B cell (primary cell): ENCODE measurements at regions of chr10 and their contacts with region 1.

Region 1: GRCh38 chr10:114173921-114174694 is at the start of gene CCDC186:
- DNase-seq: peak; percentile 98
- ATAC-seq: peak; percentile 98
- H3K4me3 ChIP-seq: peak within 1 kb of the TSS; percentile 85 to 95 (median 88)
- H3K4me3 Mint-ChIP-seq: peak within 1 kb of the TSS; percentile 89
- H3K27ac ChIP-seq: peak within 1 kb of the TSS; percentile 81 to 84
- H3K27ac Mint-ChIP-seq: peak within 1 kb of the TSS; percentile 96
- H3K4me1 ChIP-seq: peaks cover 11 to 13% of the 10 kb centered on the region in 2 donors
- H3K4me1 Mint-ChIP-seq: peaks cover 34% of the 10 kb centered on the region
- H3K27me3 ChIP-seq: no peaks in the 10 kb centered on the region
- H3K27me3 Mint-ChIP-seq: peaks cover 3% of the 10 kb centered on the region
- CTCF ChIP-seq: no peak
- total RNA-seq, gene CCDC186: 31.5 and 33.8 TPM in 2 replicates

Region 2: DNA sequence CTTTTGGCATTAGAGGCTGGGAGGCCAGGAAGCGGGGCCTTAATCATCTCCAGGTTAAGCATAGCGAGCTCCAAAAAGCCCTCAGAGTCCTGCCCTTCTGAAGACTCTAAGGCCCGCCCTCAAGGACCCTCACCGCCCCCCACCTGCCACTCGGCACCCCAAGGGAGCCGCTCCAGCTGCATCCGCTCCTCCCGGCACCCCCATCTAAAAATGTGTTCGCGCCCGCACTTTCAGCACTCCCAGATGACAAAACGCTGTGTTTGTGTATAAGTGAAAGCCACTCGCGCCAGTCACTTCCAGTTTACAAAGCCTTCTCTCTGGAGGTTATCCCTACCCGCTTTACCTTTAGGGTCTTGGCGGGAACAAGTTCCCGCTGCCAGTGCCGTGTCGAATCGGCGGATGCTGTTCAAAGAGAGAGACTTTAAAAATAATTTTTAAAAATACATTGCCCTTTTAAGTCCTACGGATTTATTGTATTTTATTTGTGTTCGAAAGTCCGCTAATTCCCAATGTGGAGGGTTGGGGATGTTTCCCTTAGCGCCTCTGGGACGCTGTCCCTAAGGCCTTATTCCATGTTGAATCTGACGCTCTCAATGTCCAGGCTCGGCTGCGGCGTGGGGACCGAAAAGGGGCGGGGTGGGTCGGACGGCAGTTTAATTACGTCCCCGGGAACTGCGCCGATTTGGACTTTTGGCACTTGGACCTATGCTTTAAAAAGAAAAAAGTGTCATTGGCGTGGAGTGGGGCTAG is 319.9 kb before region 1 on chr10 and contains the starts of genes DCLRE1A and NHLRC2:
- CTCF ChIA-PET with region 1: no interaction called
- POLR2A ChIA-PET with region 1: no interaction called
- intact Hi-C with region 1: loop called (anchors 2 kb)
- DNase-seq: peak; percentile 89
- ATAC-seq: peak; percentile 70
- H3K4me3 ChIP-seq: peak within 1 kb of the TSS; percentile 86 to 98 (median 90)
- H3K4me3 Mint-ChIP-seq: peak within 1 kb of the TSS; percentile 96
- H3K27ac ChIP-seq: peak within 1 kb of the TSS; percentile 86 to 95
- H3K27ac Mint-ChIP-seq: peak within 1 kb of the TSS; percentile 99
- H3K4me1 ChIP-seq: peaks cover 23 to 33% of the 10 kb centered on the region in 2 donors
- H3K4me1 Mint-ChIP-seq: peaks cover 48% of the 10 kb centered on the region
- H3K27me3 ChIP-seq: no peaks in the 10 kb centered on the region
- H3K27me3 Mint-ChIP-seq: no peaks in the 10 kb centered on the region
- CTCF ChIP-seq: no peak
- total RNA-seq, gene DCLRE1A: 1.9 and 2.4 TPM in 2 replicates
- total RNA-seq, gene NHLRC2: 54.1 and 59.8 TPM in 2 replicates

Region 3: DNA sequence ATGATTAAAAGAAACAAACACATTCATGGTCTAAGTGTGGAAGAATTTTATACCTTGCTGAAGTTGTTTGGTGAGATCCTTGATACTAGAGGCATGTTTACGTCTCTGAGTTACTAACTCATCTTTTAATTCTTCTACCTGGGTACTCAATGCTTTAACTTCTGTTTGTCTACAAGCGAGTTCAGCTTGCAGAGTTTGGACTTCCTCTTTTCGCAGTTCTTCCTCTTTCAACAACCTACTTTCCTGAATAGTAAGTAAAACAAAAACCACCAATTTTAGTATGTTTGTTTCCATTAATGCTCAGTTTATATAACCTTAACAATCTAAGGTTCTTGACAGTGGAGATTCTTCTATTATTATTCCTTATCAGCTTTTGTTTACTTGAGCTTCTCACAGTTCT is 43.0 kb before region 1 on chr10:
- CTCF ChIA-PET with region 1: no interaction called
- POLR2A ChIA-PET with region 1: no interaction called
- intact Hi-C with region 1: loop called (anchors 5 kb)
- DNase-seq: peak; percentile 70
- ATAC-seq: peak; percentile 92
- H3K4me3 ChIP-seq: no peak overlapping the region
- H3K4me3 Mint-ChIP-seq: peak overlapping the region; percentile 6
- H3K27ac ChIP-seq: peak overlapping the region; percentile 19 to 31
- H3K27ac Mint-ChIP-seq: peak overlapping the region; percentile 24
- H3K4me1 ChIP-seq: peaks cover 0 to 6% of the 10 kb centered on the region in 2 donors
- H3K4me1 Mint-ChIP-seq: peaks cover 13% of the 10 kb centered on the region
- H3K27me3 ChIP-seq: no peaks in the 10 kb centered on the region
- H3K27me3 Mint-ChIP-seq: no peaks in the 10 kb centered on the region
- CTCF ChIP-seq: no peak

Region 4: DNA sequence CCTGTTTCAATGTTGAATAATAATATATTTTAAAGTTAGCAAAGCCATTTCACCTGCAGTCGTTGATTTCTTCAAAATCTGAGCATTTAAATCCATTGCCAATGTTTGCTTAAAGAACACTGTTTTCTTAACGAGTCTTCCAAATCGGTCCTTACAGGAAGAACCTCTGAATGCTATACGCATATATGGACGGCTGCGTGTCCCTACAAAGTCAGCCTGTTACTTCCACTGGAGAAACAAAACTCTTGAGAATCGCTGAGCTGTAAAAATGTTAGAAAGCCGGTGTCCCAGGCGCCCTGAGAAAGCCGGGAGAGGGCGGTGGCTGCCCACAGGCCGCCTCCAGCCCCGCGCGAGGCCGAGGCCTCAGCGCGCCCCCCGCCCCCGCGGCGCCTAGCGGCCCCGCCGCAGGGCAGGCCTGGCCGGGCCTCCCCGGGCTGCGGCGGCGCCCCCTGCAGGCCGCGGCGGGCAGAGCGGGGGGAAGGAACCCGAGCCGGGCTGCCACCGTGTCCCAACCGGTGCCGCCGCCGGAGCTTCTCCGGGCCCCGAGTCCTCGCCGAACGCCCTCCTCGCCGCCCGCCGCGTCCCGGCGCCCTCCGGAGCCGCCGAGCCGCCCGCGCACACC is 647.3 kb after region 1 on chr10 and contains the start of gene FHIP2A:
- CTCF ChIA-PET with region 1: no interaction called
- POLR2A ChIA-PET with region 1: no interaction called
- intact Hi-C with region 1: loop called (anchors 10 kb)
- DNase-seq: peak; percentile 90
- ATAC-seq: peak; percentile 93
- H3K4me3 ChIP-seq: peak within 1 kb of the TSS; percentile 53 to 86 (median 78)
- H3K4me3 Mint-ChIP-seq: peak within 1 kb of the TSS; percentile 94
- H3K27ac ChIP-seq: peak within 1 kb of the TSS; percentile 57 to 83
- H3K27ac Mint-ChIP-seq: peak within 1 kb of the TSS; percentile 96
- H3K4me1 ChIP-seq: peaks cover 6 to 13% of the 10 kb centered on the region in 2 donors
- H3K4me1 Mint-ChIP-seq: peaks cover 29% of the 10 kb centered on the region
- H3K27me3 ChIP-seq: no peaks in the 10 kb centered on the region
- H3K27me3 Mint-ChIP-seq: no peaks in the 10 kb centered on the region
- CTCF ChIP-seq: peak; percentile 64
- total RNA-seq, gene FHIP2A: 18.2 and 28.6 TPM in 2 replicates